H1 (cell line): ENCODE measurements at regions of chr4 and their contacts with region 1.

Region 1: GRCh38 chr4:8854931-8855330 is 16.7 kb downstream of the HMX1 start:
- DNase-seq: no peak
- H3K4me3 ChIP-seq: no peak overlapping the region
- H3K27ac ChIP-seq: no peak overlapping the region
- H3K4me1 ChIP-seq: peaks cover 0 to 33% (median 23%) of the 10 kb centered on the region in 4 experiments; a peak in 6 of 7 replicates
- H3K27me3 ChIP-seq: peaks cover 59 to 70% (median 66%) of the 10 kb centered on the region in 4 experiments
- CTCF ChIP-seq: no peak
- EP300 ChIP-seq: no peak
- POLR2A ChIP-seq: no peak
- RAD21 ChIP-seq: 0 out of 4 replicates have a peak, but pooled peaks of 1 of the 2 experiments have one; percentile 7

Region 2: GRCh38 chr4:8897251-8898167 is 42.6 kb after region 1 on chr4:
- CTCF ChIA-PET with region 1: interaction called, 13 read pairs
- POLR2A ChIA-PET with region 1: no interaction called
- DNase-seq: no peak
- H3K4me3 ChIP-seq: no peak overlapping the region
- H3K27ac ChIP-seq: no peak overlapping the region
- H3K4me1 ChIP-seq: peaks cover 0 to 27% (median 17%) of the 10 kb centered on the region in 4 experiments; a peak in 6 of 7 replicates
- H3K27me3 ChIP-seq: peaks cover 33 to 53% (median 44%) of the 10 kb centered on the region in 4 experiments
- CTCF ChIP-seq: no peak
- EP300 ChIP-seq: no peak
- POLR2A ChIP-seq: no peak
- RAD21 ChIP-seq: no peak